ENCODE measurements at regions of chr1 and their contacts with region 1.

Region 1: GRCh38 chr1:206706298-206706791 is 21.6 kb downstream of the MAPKAPK2 start:
- DNase-seq: no peak
- H3K4me3 ChIP-seq: no peak overlapping the region
- H3K4me3 Mint-ChIP-seq: peak overlapping the region in 4 of 8 donors; percentile 47 to 69 (median 62)
- H3K27ac ChIP-seq: no peak overlapping the region
- H3K27ac Mint-ChIP-seq: peak overlapping the region in 5 of 7 donors; percentile 14 to 39 (median 28)
- H3K4me1 ChIP-seq: peaks cover 89% of the 10 kb centered on the region
- H3K4me1 Mint-ChIP-seq: peaks cover 70 to 90% (median 81%) of the 10 kb centered on the region in 4 donors
- H3K27me3 ChIP-seq: no peaks in the 10 kb centered on the region
- H3K27me3 Mint-ChIP-seq: no peaks in the 10 kb centered on the region

Region 2: DNA sequence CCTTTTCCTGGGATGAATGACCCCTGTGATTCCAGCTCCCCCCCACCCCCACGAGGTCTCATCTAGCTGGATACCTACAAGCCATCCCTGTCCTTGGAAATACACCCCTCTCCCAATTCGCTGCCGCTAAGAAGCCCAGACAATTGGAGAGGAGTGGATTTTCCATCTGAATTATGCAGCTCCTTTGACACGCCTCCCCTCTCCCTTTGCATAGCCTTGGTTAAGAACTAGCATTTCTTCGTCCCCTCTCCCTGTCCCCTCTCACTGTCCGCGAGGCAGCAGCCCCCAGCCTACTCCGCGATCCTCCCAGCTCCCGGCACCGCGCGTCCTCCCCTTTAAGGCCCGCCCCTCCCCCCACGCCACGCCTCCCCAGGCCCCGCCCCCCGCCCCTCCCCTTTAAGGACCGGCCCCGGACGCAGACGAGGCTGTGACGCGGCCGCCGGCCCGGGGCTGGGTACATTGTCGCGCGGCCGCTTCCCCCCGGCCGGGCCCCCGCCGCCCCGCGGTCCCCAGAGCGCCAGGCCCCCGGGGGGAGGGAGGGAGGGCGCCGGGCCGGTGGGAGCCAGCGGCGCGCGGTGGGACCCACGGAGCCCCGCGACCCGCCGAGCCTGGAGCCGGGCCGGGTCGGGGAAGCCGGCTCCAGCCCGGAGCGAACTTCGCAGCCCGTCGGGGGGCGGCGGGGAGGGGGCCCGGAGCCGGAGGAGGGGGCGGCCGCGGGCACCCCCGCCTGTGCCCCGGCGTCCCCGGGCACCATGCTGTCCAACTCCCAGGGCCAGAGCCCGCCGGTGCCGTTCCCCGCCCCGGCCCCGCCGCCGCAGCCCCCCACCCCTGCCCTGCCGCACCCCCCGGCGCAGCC is 21.6 kb before region 1 on chr1 and contains the start of gene MAPKAPK2:
- CTCF ChIA-PET with region 1: interaction called, 10 read pairs
- POLR2A ChIA-PET with region 1: interaction called, 6 read pairs
- intact Hi-C with region 1: loop called (anchors 1 kb)
- DNase-seq: peak; percentile 71 to 77 (median 73)
- H3K4me3 ChIP-seq: peak within 1 kb of the TSS; percentile 55 to 93
- H3K4me3 Mint-ChIP-seq: peak within 1 kb of the TSS; percentile 93 to 100 (median 96)
- H3K27ac ChIP-seq: peak within 1 kb of the TSS; percentile 90
- H3K27ac Mint-ChIP-seq: peak within 1 kb of the TSS; percentile 94 to 98 (median 97)
- H3K4me1 ChIP-seq: peaks cover 45% of the 10 kb centered on the region
- H3K4me1 Mint-ChIP-seq: peaks cover 26 to 52% (median 37%) of the 10 kb centered on the region in 4 donors
- H3K27me3 ChIP-seq: no peaks in the 10 kb centered on the region
- H3K27me3 Mint-ChIP-seq: peaks cover 2 to 3% of the 10 kb centered on the region in 2 donors
- total RNA-seq, gene MAPKAPK2: 71.7 to 72.8 TPM

Region 3: DNA sequence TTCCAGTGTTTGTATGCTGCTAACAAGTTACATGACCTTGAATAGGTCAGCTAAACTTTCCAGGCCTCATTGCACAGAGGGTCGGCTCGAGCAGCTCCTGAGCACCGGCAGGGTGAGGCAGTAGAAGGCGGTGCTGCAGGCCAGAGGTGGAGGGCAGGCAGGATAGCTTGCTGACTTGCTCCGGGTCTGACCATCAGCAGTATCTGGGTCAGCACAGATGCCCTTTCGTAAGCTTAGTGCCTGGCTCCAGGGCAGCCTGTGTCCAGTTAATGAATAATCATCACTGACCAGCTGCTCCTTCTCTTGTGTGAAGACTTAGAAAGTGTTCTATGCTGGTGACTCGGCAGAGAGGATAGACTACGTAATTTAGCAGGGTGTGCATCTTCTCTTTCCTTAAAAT is 14.7 kb before region 1 on chr1:
- CTCF ChIA-PET with region 1: interaction called, 10 read pairs
- POLR2A ChIA-PET with region 1: interaction called, 6 read pairs
- intact Hi-C with region 1: loop called (anchors 1 kb)
- DNase-seq: no peak
- H3K4me3 ChIP-seq: no peak overlapping the region
- H3K4me3 Mint-ChIP-seq: peak overlapping the region in 3 of 8 donors; percentile 16 to 37 (median 23)
- H3K27ac ChIP-seq: no peak overlapping the region
- H3K27ac Mint-ChIP-seq: peak overlapping the region in 5 of 7 donors; percentile 12 to 89 (median 29)
- H3K4me1 ChIP-seq: peaks cover 79% of the 10 kb centered on the region
- H3K4me1 Mint-ChIP-seq: peaks cover 65 to 98% (median 83%) of the 10 kb centered on the region in 4 donors
- H3K27me3 ChIP-seq: no peaks in the 10 kb centered on the region
- H3K27me3 Mint-ChIP-seq: no peaks in the 10 kb centered on the region

Region 4: DNA sequence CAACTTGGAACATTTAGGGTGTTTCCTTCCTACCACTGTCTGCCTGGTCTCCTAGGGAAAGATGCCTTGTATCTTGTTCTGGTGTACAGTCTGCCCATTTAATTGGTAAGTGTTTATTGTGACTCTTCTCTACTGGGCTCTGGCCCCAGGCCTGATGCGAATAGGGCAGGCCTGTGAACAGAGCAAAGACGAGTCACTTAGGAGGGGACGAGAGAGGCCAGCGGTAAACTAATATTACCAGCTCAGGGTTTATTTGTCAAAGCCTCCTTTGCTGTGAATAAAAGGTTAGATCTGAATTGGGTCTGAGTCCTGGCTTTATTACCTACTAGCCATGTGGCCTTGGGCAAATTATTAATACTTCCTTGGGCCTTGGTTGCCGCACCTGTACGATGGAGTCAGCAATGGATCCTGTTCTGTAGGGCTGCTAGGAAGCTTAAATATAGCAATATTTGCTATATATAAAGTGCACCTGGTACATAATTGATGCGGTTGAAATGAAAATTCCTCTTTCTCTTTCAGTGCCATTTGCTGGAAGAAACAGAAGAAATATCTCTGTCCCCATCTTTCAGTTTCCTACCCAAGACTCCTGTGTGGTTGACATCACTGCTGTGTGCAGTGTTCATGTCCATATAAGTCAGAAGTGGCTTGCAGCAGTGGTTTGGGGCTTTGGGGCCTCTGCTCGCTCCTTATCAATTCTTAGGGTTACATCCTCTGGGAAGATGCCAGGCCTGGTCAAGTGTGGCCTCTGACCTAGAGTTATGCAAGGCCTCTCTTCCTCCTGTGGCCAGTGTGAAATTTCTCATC is 10.7 kb after region 1 on chr1:
- CTCF ChIA-PET with region 1: interaction called, 19 read pairs
- POLR2A ChIA-PET with region 1: interaction called, 15 read pairs
- intact Hi-C with region 1: loop called (anchors 1 kb)
- DNase-seq: peak; percentile 21 to 59 (median 33)
- H3K4me3 ChIP-seq: no peak overlapping the region
- H3K4me3 Mint-ChIP-seq: peak overlapping the region; percentile 57 to 83 (median 73)
- H3K27ac ChIP-seq: peak overlapping the region; percentile 34
- H3K27ac Mint-ChIP-seq: peak overlapping the region; percentile 87 to 97 (median 95)
- H3K4me1 ChIP-seq: peaks cover 86% of the 10 kb centered on the region
- H3K4me1 Mint-ChIP-seq: peaks cover 68 to 90% (median 81%) of the 10 kb centered on the region in 4 donors
- H3K27me3 ChIP-seq: no peaks in the 10 kb centered on the region
- H3K27me3 Mint-ChIP-seq: no peaks in the 10 kb centered on the region

Measured in CD4-positive, alpha-beta memory T cell (primary cell).